Heart left ventricle (tissue), 16 donors: ENCODE measurements at regions of chr20 and their contacts with region 1.

Region 1: DNA sequence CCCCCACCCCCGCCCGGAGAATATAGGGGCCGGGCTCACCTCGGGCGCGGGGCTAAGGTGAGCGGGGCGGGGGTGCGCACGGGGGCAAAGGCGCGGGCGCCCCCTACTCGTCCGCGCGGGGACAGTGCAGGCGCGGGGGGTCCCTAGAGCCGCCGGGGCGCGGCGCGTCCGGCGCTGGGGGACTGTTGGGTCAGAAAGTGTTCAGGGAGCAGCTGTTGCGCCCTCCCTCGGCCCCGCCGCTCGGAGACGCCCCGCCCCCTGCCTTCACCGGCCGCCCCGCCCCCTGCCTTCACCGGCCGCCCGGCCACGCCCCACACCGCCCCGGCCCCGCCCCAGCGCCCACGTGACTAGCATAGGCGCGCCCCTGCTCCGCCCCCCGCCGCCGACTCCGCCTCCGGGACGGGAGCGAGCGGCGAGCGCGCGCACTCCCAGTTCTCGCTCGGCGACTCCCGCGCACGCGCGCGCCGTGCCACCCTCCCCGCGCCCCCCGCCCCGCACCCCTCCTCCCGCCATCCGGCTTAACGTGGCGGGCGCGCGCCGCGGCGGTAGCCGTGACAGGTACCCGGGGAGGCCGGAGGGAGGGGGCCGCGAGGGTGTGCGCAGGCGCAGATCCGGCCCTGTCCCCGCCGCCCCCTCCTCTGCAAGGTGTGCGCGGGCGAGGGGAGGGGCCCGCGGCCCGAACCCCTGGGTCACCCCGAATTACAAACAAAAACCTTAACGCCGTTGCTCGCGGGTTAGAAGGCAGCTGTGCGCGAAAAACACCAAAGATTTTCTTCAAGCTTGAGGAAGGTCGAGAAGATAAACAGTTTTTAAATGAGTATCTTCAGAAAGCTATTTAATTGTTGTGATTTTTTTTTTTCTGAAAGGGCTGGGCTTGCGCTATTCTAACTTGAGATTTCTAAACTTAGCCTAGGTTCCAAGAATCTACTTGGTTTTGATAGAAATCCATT is 704 bp upstream of the ZNF217 start:
- DNase-seq: peak; percentile 96 to 100 (median 98)
- ATAC-seq: peak; percentile 88 to 96 (median 90)
- H3K4me3 ChIP-seq: peak overlapping the region; percentile 63 to 96 (median 94)
- H3K27ac ChIP-seq: peak overlapping the region; percentile 90 to 100 (median 99)
- H3K4me1 ChIP-seq: peaks cover 0 to 57% (median 18%) of the 10 kb centered on the region in 12 donors
- H3K27me3 ChIP-seq: no peaks in the 10 kb centered on the region
- CTCF ChIP-seq: peak in 11 of 12 donors; percentile 12 to 59 (median 30)
- POLR2A ChIP-seq: peak; percentile 64 to 85

Region 2: DNA sequence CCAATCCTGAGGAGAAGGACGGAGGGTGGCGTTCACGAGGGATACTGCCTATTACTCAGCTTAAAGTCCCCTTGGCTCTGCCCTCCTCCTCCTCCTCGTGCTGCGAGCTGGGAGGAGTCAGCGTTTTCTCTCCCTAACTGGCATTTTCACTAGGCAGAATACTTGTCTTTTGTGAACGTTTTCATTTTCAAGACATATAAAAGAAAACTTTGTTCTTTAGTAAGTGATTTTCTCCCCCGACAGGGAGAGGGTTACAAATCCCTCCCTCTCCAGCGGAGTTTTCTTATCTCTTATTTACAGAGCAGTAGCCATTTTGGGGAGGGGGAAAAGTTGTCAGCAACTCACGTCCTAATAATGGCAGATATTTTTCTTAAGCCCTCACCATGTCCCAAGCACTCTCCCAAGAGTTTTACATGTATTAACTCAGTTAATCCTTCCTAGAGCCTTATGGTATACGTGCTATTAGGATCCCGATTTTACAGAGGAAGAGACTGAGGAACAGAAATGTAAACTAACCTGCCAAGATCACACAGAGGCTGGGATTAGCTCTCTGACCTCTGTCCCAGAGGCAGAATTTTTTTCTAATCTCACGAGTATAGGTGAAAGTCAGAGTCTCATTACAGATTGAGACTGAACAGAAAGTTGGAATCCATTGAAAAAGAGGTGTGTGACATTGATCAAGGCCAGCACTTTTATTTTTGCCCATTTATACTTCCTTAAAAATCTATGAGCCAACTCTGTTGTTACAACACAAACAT is 29.3 kb after region 1 on chr20:
- intact Hi-C with region 1: loop called in 2 of 10 experiments (anchors 2 kb)
- DNase-seq: peak in 4 of 5 donors; percentile 67 to 76 (median 72)
- ATAC-seq: peak; percentile 84 to 94 (median 92)
- H3K4me3 ChIP-seq: peak overlapping the region in 11 of 12 donors; percentile 26 to 57 (median 51)
- H3K27ac ChIP-seq: peak overlapping the region; percentile 71 to 91 (median 82)
- H3K4me1 ChIP-seq: peaks cover 12 to 60% (median 27%) of the 10 kb centered on the region in 12 donors
- H3K27me3 ChIP-seq: no peaks in the 10 kb centered on the region
- CTCF ChIP-seq: peak in 1 of 12 donors; percentile 22
- POLR2A ChIP-seq: peak in 1 of 2 donors; percentile 34

Region 3: DNA sequence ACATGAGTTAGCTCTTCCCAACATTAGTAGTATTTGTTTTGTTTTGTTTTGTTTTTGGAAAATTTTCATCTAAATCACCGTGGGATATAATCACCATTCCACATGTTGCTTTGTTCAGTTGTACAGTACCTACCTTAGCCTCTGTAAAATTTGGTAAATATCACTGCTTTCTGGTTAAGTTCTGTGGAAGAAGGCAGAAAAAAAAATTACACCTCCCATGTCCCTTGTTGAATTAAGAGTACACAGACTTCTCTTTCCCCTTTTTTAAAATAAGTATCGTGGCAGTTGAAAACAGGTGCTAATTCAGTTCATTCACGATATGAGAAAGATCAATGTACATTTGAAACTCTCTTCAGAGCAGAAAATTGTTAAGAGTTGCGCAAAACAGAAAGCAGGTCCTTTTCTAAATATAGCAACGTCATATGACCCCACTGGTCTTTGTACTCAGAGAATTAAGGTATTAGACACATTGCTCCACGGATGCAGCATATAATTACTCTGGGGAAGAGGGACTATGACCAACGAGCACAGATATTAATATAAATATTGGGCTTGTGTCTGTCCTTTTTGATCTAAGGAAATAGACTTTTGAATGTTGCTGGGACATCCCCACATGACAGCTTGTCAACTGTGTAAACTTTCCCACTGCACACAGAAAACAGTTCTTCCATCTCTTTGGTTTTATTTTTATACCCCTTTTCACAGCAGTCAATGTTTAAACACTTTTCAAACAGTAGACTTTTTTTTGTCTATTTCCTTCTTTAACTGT is 57.9 kb after region 1 on chr20:
- intact Hi-C with region 1: loop called in 1 of 10 experiments (anchors 5 kb)
- DNase-seq: no peak
- ATAC-seq: peak; percentile 40 to 81 (median 62)
- H3K4me3 ChIP-seq: peak overlapping the region in 8 of 12 donors; percentile 2 to 38 (median 20)
- H3K27ac ChIP-seq: peak overlapping the region in 11 of 12 donors; percentile 33 to 86 (median 46)
- H3K4me1 ChIP-seq: peaks cover 0 to 54% (median 17%) of the 10 kb centered on the region in 12 donors
- H3K27me3 ChIP-seq: no peaks in the 10 kb centered on the region
- CTCF ChIP-seq: no peak
- POLR2A ChIP-seq: no peak

Region 4: DNA sequence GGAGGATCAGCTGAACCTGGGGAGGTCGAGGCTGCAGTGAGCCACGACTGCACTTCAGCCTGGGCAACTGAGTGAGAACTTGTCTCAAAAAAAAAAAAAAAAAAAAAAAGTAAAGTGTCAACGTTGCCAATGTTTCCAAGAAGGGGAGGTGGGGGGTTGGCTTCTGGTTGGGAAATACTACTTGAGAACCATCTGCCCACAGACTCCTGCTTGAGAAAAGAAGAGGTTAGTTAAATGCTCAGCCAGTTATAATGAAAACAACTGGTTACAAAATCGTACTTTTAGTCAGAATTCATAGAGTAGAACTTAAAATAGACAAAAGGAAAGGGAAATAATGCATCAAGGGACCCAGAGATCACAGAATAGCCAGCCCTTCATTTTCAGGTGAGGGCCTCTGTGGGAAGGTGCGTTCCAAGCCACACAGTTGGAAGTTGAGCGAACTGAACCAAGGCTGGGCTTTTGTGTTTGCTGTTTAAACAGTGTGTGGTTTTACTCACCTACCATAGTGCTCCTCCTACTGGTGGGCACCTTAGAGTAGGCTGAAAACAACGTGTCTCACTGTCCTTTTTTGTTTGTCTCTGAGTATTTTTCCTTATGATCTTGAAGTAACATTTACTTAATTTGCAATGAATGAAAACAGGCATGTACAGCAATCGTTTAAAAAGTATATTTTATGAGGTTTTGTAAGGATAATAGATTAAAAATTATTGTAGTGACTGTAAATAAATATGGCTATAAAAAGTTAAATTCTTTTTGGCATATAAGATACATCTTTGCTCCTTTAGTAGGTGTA is 275.3 kb after region 1 on chr20:
- intact Hi-C with region 1: loop called in 1 of 10 experiments (anchors 5 kb)
- DNase-seq: peak in 4 of 5 donors; percentile 54 to 67 (median 61)
- ATAC-seq: peak; percentile 72 to 94 (median 87)
- H3K4me3 ChIP-seq: peak overlapping the region in 1 of 12 donors; percentile 13
- H3K27ac ChIP-seq: peak overlapping the region in 4 of 12 donors; percentile 20 to 65 (median 52)
- H3K4me1 ChIP-seq: peaks cover 0 to 62% (median 22%) of the 10 kb centered on the region in 12 donors
- H3K27me3 ChIP-seq: no peaks in the 10 kb centered on the region
- CTCF ChIP-seq: peak; percentile 60 to 86 (median 76)
- POLR2A ChIP-seq: no peak